Pancreas (tissue), 10 donors: ENCODE measurements at regions of chr6 and their contacts with region 1.

Region 1: GRCh38 chr6:114108119-114109002 is 137.4 kb upstream of the HDAC2 start:
- DNase-seq: peak; percentile 25 to 85 (median 56)
- ATAC-seq: peak; percentile 56 to 77 (median 70)
- H3K4me3 ChIP-seq: no peak overlapping the region
- H3K27ac ChIP-seq: no peak overlapping the region
- H3K4me1 ChIP-seq: no peaks in the 10 kb centered on the region
- H3K27me3 ChIP-seq: no peaks in the 10 kb centered on the region
- CTCF ChIP-seq: peak in 2 of 4 donors; percentile 16 to 33

Region 2: DNA sequence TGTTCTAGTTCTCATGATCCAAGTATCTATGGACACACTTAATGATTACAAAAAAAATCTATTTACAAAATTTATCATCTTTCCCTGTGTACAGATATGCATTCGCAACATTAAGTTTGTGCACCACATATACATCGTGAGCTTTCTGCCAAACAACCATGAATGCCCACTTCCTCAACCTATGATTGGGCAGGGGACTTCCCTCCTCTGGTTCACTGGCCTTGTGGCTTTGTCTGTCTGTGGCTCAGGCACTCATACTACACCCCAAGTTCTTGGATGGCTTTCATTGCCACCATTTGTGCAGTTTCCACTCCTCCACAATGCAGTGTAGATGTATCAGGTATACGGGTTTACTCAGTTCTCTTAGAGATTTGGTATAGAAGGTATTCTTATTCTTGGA is 159.5 kb after region 1 on chr6:
- intact Hi-C with region 1: no loop called
- DNase-seq: no peak
- ATAC-seq: no peak
- H3K4me3 ChIP-seq: no peak overlapping the region
- H3K27ac ChIP-seq: no peak overlapping the region
- H3K4me1 ChIP-seq: no peaks in the 10 kb centered on the region
- H3K27me3 ChIP-seq: no peaks in the 10 kb centered on the region
- CTCF ChIP-seq: no peak

Region 3: GRCh38 chr6:114290864-114291263 is 182.5 kb after region 1 on chr6:
- intact Hi-C with region 1: loop called in 1 of 3 experiments (anchors 10 kb)
- DNase-seq: no peak
- ATAC-seq: no peak
- H3K4me3 ChIP-seq: no peak overlapping the region
- H3K27ac ChIP-seq: no peak overlapping the region
- H3K4me1 ChIP-seq: no peaks in the 10 kb centered on the region
- H3K27me3 ChIP-seq: no peaks in the 10 kb centered on the region
- CTCF ChIP-seq: no peak